IMR-90 (cell line): ENCODE measurements at regions of chr12 and their contacts with region 1.

Region 1: GRCh38 chr12:106170285-106170684 is 31.5 kb upstream of the NUAK1 start:
- DNase-seq: peak; percentile 55
- ATAC-seq: no peak
- H3K4me3 ChIP-seq: no peak overlapping the region
- H3K27ac ChIP-seq: no peak overlapping the region
- H3K4me1 ChIP-seq: no peaks in the 10 kb centered on the region
- H3K27me3 ChIP-seq: peaks cover 9% of the 10 kb centered on the region
- CTCF ChIP-seq: no peak
- POLR2A ChIP-seq: no peak
- RAD21 ChIP-seq: no peak

Region 2: GRCh38 chr12:106157802-106158201 is 12.5 kb before region 1 on chr12:
- CTCF ChIA-PET with region 1: interaction called, 11 read pairs
- POLR2A ChIA-PET with region 1: no interaction called
- dilution Hi-C with region 1: no loop called
- in situ Hi-C with region 1: no loop called
- intact Hi-C with region 1: no loop called
- DNase-seq: no peak
- ATAC-seq: peak; percentile 76
- H3K4me3 ChIP-seq: no peak overlapping the region
- H3K27ac ChIP-seq: no peak overlapping the region
- H3K4me1 ChIP-seq: peaks cover 6% of the 10 kb centered on the region
- H3K27me3 ChIP-seq: peaks cover 3% of the 10 kb centered on the region
- CTCF ChIP-seq: no peak
- POLR2A ChIP-seq: no peak
- RAD21 ChIP-seq: no peak